Activated naive CD4-positive, alpha-beta T cell treated with anti-CD3 and anti-CD28 coated beads for 36 hours (primary cell): ENCODE measurements at regions of chr7 and their contacts with region 1.

Region 1: GRCh38 chr7:24572997-24573625 is at the start of gene PALS2:
- DNase-seq: peak; percentile 76
- H3K4me3 Mint-ChIP-seq: peak within 1 kb of the TSS; percentile 84
- H3K27ac Mint-ChIP-seq: peak within 1 kb of the TSS; percentile 72
- H3K4me1 Mint-ChIP-seq: peaks cover 32% of the 10 kb centered on the region
- H3K27me3 Mint-ChIP-seq: peaks cover 3% of the 10 kb centered on the region
- total RNA-seq, gene PALS2: 21.8 to 22.5 TPM

Region 2: DNA sequence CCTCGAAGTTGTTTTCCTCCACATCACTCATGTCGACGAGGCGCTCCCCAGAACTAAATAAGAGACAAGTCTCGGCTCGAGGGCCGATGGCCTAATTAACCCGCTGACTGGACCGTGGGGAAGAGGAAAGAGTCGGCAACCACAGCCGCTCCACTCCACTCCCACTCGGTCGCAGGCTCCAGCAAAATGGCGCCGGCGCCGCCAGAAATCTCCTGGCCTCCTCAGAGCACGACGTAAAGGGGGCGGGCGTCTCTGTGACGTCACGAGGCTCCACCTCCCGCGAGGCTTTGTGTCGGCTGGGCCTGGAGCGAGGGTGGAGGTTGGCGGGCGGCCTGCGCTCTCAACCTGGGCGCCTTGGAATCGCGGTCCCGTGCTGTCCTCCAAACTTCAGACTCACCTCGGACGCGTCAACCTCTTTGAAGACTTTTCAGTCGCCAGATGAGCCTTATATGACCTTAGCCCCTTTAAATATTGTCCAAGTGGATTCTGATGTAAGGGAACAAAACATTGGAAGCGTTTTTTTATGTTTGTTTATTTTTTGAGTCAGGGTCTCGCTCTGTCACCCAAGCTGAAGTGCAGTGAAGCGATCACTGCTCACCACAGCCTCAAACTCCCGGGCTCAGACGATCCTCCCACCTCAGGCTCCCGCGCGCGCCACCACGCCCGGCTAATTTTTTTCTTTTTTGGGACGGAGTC is 1041.2 kb before region 1 on chr7 and contains the start of gene TRA2A:
- CTCF ChIA-PET with region 1: no interaction called
- intact Hi-C with region 1: loop called (anchors 5 kb)
- DNase-seq: peak; percentile 99
- H3K4me3 Mint-ChIP-seq: peak within 1 kb of the TSS; percentile 99
- H3K27ac Mint-ChIP-seq: peak within 1 kb of the TSS; percentile 100
- H3K4me1 Mint-ChIP-seq: peaks cover 43% of the 10 kb centered on the region
- H3K27me3 Mint-ChIP-seq: no peaks in the 10 kb centered on the region
- total RNA-seq, gene TRA2A: 77.8 to 79.0 TPM

Region 3: GRCh38 chr7:24560772-24561171 is 12.3 kb before region 1 on chr7:
- CTCF ChIA-PET with region 1: interaction called, 5 read pairs
- intact Hi-C with region 1: loop called (anchors 1 kb)
- DNase-seq: peak; percentile 26
- H3K4me3 Mint-ChIP-seq: no peak overlapping the region
- H3K27ac Mint-ChIP-seq: no peak overlapping the region
- H3K4me1 Mint-ChIP-seq: peaks cover 19% of the 10 kb centered on the region
- H3K27me3 Mint-ChIP-seq: no peaks in the 10 kb centered on the region

Region 4: GRCh38 chr7:24665564-24666294 is 92.6 kb after region 1 on chr7:
- CTCF ChIA-PET with region 1: interaction called, 44 read pairs
- intact Hi-C with region 1: loop called (anchors 1 kb)
- DNase-seq: peak; percentile 71
- H3K4me3 Mint-ChIP-seq: no peak overlapping the region
- H3K27ac Mint-ChIP-seq: no peak overlapping the region
- H3K4me1 Mint-ChIP-seq: peaks cover 4% of the 10 kb centered on the region
- H3K27me3 Mint-ChIP-seq: no peaks in the 10 kb centered on the region

Region 5: GRCh38 chr7:24965831-24966709 is 393.0 kb after region 1 on chr7:
- CTCF ChIA-PET with region 1: no interaction called
- intact Hi-C with region 1: loop called (anchors 5 kb)
- DNase-seq: peak; percentile 68
- H3K4me3 Mint-ChIP-seq: peak overlapping the region; percentile 17
- H3K27ac Mint-ChIP-seq: peak overlapping the region; percentile 77
- H3K4me1 Mint-ChIP-seq: peaks cover 77% of the 10 kb centered on the region
- H3K27me3 Mint-ChIP-seq: no peaks in the 10 kb centered on the region

Region 6: DNA sequence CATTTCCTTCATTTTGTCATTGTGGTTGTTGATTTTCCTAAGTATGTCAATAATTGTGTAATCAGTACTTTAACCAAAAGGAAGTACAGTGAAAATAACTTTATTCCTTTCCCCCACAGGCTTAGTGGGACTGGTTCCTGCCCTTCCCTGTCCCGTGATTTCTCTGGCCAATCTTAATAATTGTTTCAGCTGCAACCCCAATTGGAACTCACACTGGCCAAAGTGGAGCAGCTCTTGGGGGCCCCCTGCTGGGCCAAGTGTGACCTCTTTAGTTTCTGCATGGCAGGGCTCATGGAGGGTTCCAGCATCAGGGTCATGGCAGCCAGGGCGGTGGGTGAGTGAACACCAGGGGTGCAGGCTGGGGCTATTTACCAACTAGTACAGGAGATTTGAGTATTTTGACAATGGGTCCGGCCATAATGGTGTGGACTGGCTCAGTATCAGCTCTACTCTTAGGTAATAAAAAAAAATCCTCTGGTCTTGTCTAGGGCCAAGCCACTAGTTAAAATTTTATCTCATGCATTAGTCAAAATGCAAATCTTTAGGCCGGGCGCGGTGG is 520.2 kb after region 1 on chr7:
- CTCF ChIA-PET with region 1: interaction called, 8 read pairs
- intact Hi-C with region 1: loop called (anchors 2 kb)
- DNase-seq: peak; percentile 90
- H3K4me3 Mint-ChIP-seq: no peak overlapping the region
- H3K27ac Mint-ChIP-seq: no peak overlapping the region
- H3K4me1 Mint-ChIP-seq: peaks cover 8% of the 10 kb centered on the region
- H3K27me3 Mint-ChIP-seq: peaks cover 2% of the 10 kb centered on the region